ENCODE measurements at regions of chr5 and their contacts with region 1.

Region 1: GRCh38 chr5:95892780-95893354 is 68.8 kb downstream of the ELL2 start:
- DNase-seq: peak; percentile 40
- H3K4me3 Mint-ChIP-seq: no peak overlapping the region
- H3K27ac Mint-ChIP-seq: no peak overlapping the region
- H3K4me1 Mint-ChIP-seq: peaks cover 11% of the 10 kb centered on the region
- H3K27me3 Mint-ChIP-seq: no peaks in the 10 kb centered on the region

Region 2: GRCh38 chr5:95870105-95870672 is 22.7 kb before region 1 on chr5:
- CTCF ChIA-PET with region 1: no interaction called
- POLR2A ChIA-PET with region 1: no interaction called
- intact Hi-C with region 1: no loop called
- DNase-seq: peak; percentile 71
- H3K4me3 Mint-ChIP-seq: peak overlapping the region; percentile 54
- H3K27ac Mint-ChIP-seq: peak overlapping the region; percentile 98
- H3K4me1 Mint-ChIP-seq: peaks cover 58% of the 10 kb centered on the region
- H3K27me3 Mint-ChIP-seq: no peaks in the 10 kb centered on the region

Region 3: GRCh38 chr5:95949810-95950209 is 56.9 kb after region 1 on chr5:
- CTCF ChIA-PET with region 1: no interaction called
- POLR2A ChIA-PET with region 1: no interaction called
- intact Hi-C with region 1: loop called (anchors 5 kb)
- DNase-seq: no peak
- H3K4me3 Mint-ChIP-seq: no peak overlapping the region
- H3K27ac Mint-ChIP-seq: no peak overlapping the region
- H3K4me1 Mint-ChIP-seq: peaks cover 30% of the 10 kb centered on the region
- H3K27me3 Mint-ChIP-seq: no peaks in the 10 kb centered on the region